Activated B cell treated with CpG ODN at 0.5 μM for 24 hours (primary cell): ENCODE measurements at regions of chr21 and their contacts with region 1.

Region 1: GRCh38 chr21:37166733-37167132 is 93.7 kb downstream of the TTC3 start:
- DNase-seq: no peak
- ATAC-seq: no peak
- H3K4me3 Mint-ChIP-seq: no peak overlapping the region
- H3K27ac Mint-ChIP-seq: peak overlapping the region; percentile 19
- H3K4me1 Mint-ChIP-seq: no peaks in the 10 kb centered on the region
- H3K27me3 Mint-ChIP-seq: no peaks in the 10 kb centered on the region
- CTCF ChIP-seq: no peak

Region 2: DNA sequence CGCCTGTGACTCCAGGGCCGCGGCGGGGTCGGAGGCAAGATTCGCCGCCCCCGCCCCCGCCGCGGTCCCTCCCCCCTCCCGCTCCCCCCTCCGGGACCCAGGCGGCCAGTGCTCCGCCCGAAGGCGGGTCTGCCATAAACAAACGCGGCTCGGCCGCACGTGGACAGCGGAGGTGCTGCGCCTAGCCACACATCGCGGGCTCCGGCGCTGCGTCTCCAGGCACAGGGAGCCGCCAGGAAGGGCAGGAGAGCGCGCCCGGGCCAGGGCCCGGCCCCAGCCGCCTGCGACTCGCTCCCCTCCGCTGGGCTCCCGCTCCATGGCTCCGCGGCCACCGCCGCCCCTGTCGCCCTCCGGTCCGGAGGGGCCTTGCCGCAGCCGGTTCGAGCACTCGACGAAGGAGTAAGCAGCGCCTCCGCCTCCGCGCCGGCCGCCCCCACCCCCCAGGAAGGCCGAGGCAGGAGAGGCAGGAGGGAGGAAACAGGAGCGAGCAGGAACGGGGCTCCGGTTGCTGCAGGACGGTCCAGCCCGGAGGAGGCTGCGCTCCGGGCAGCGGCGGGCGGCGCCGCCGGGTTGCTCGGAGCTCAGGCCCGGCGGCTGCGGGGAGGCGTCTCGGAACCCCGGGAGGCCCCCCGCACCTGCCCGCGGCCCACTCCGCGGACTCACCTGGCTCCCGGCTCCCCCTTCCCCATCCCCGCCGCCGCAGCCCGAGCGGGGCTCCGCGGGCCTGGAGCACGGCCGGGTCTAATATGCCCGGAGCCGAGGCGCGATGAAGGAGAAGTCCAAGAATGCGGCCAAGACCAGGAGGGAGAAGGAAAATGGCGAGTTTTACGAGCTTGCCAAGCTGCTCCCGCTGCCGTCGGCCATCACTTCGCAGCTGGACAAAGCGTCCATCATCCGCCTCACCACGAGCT is 467.5 kb before region 1 on chr21 and contains the start of gene SIM2:
- CTCF ChIA-PET with region 1: no interaction called
- POLR2A ChIA-PET with region 1: no interaction called
- intact Hi-C with region 1: no loop called
- DNase-seq: no peak
- ATAC-seq: no peak
- H3K4me3 Mint-ChIP-seq: peak within 1 kb of the TSS; percentile 52
- H3K27ac Mint-ChIP-seq: no peak within 1 kb of the TSS
- H3K4me1 Mint-ChIP-seq: peaks cover 13% of the 10 kb centered on the region
- H3K27me3 Mint-ChIP-seq: peaks cover 60% of the 10 kb centered on the region
- CTCF ChIP-seq: no peak
- total RNA-seq, gene SIM2: not detected in 2 replicates

Region 3: GRCh38 chr21:37085726-37086125 is 81.0 kb before region 1 on chr21:
- CTCF ChIA-PET with region 1: no interaction called
- POLR2A ChIA-PET with region 1: no interaction called
- intact Hi-C with region 1: no loop called
- DNase-seq: no peak
- ATAC-seq: no peak
- H3K4me3 Mint-ChIP-seq: no peak overlapping the region
- H3K27ac Mint-ChIP-seq: no peak overlapping the region
- H3K4me1 Mint-ChIP-seq: peaks cover 19% of the 10 kb centered on the region
- H3K27me3 Mint-ChIP-seq: no peaks in the 10 kb centered on the region
- CTCF ChIP-seq: no peak

Region 4: GRCh38 chr21:37358397-37358796 is 191.7 kb after region 1 on chr21:
- CTCF ChIA-PET with region 1: no interaction called
- POLR2A ChIA-PET with region 1: no interaction called
- intact Hi-C with region 1: no loop called
- DNase-seq: no peak
- ATAC-seq: no peak
- H3K4me3 Mint-ChIP-seq: no peak overlapping the region
- H3K27ac Mint-ChIP-seq: no peak overlapping the region
- H3K4me1 Mint-ChIP-seq: no peaks in the 10 kb centered on the region
- H3K27me3 Mint-ChIP-seq: peaks cover 13% of the 10 kb centered on the region
- CTCF ChIP-seq: no peak

Region 5: DNA sequence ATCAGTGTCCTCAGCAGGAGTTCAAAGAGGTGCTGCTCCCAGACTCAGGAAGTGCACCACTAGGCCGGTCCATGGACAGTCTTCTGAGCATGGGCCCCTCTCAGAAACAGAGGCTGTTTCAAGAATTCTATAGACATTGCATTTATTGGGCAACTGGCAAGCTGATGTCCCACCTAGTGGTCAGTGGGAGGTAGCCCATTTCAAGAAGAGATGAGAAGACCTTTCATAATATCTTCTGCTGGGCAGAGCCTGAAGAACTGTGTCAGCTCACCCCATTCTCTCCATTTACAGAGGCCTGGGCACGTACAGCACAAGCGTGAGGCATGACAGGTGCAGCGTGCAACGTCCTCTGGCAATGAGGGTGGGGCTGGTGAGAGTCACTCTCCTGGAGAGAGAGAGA is 415.9 kb after region 1 on chr21:
- CTCF ChIA-PET with region 1: no interaction called
- POLR2A ChIA-PET with region 1: no interaction called
- intact Hi-C with region 1: loop called (anchors 5 kb)
- DNase-seq: no peak
- ATAC-seq: peak; percentile 31
- H3K4me3 Mint-ChIP-seq: no peak overlapping the region
- H3K27ac Mint-ChIP-seq: no peak overlapping the region
- H3K4me1 Mint-ChIP-seq: no peaks in the 10 kb centered on the region
- H3K27me3 Mint-ChIP-seq: peaks cover 20% of the 10 kb centered on the region
- CTCF ChIP-seq: no peak

Region 6: GRCh38 chr21:37642493-37642892 is 475.8 kb after region 1 on chr21:
- CTCF ChIA-PET with region 1: interaction called, 7 read pairs
- POLR2A ChIA-PET with region 1: no interaction called
- intact Hi-C with region 1: loop called (anchors 2 kb)
- DNase-seq: no peak
- ATAC-seq: no peak
- H3K4me3 Mint-ChIP-seq: no peak overlapping the region
- H3K27ac Mint-ChIP-seq: no peak overlapping the region
- H3K4me1 Mint-ChIP-seq: peaks cover 7% of the 10 kb centered on the region
- H3K27me3 Mint-ChIP-seq: peaks cover 33% of the 10 kb centered on the region
- CTCF ChIP-seq: no peak

Region 7: GRCh38 chr21:38126669-38127303 is 960.1 kb after region 1 on chr21:
- CTCF ChIA-PET with region 1: no interaction called
- POLR2A ChIA-PET with region 1: no interaction called
- intact Hi-C with region 1: loop called (anchors 5 kb)
- DNase-seq: no peak
- ATAC-seq: no peak
- H3K4me3 Mint-ChIP-seq: no peak overlapping the region
- H3K27ac Mint-ChIP-seq: no peak overlapping the region
- H3K4me1 Mint-ChIP-seq: no peaks in the 10 kb centered on the region
- H3K27me3 Mint-ChIP-seq: peaks cover 5% of the 10 kb centered on the region
- CTCF ChIP-seq: no peak

Region 8: GRCh38 chr21:38355992-38356797 is 1189.5 kb after region 1 on chr21:
- CTCF ChIA-PET with region 1: no interaction called
- POLR2A ChIA-PET with region 1: no interaction called
- intact Hi-C with region 1: loop called (anchors 5 kb)
- DNase-seq: peak; percentile 30
- ATAC-seq: no peak
- H3K4me3 Mint-ChIP-seq: no peak overlapping the region
- H3K27ac Mint-ChIP-seq: no peak overlapping the region
- H3K4me1 Mint-ChIP-seq: no peaks in the 10 kb centered on the region
- H3K27me3 Mint-ChIP-seq: peaks cover 8% of the 10 kb centered on the region
- CTCF ChIP-seq: no peak